GM18951 (cell line): ENCODE measurements at regions of chr18 and their contacts with region 1.

Region 1: GRCh38 chr18:62982600-62983251 is 267.4 kb downstream of the PHLPP1 start:
- POLR2A ChIP-seq: no peak

Region 2: DNA sequence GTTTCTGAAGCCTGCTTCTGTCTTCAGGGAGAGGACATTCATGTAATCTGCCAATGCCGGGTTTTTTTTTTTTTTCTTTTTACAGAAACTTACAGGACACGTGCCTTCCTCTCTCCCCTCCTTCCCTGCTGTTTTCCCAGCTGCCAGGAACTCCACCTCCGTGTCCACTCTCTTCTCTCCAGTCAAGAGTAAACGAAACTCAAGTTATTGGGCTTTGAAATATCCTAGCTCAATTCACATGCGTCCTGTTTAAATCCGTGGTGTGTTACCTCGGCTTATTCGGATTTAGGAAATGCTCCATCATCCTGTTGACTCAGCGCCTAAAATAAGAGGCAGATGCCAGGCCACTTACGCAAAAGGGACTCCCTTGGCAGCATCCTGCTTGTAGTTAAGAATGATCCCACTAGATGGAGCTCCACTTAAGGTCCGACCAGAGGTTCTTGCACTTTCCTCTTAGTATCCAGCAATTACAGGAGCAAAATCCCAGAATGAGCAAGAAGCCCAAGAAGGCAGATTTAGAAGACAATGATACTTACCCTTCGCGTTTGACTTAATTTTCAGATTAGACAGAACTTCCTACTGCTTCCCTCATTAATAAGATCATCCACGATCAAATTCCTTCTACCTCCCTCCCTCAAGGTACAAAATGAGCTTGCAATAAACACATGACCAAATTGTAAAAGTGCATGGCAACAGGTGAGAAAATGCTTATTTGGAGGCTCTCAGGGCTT is 557.1 kb before region 1 on chr18:
- in situ Hi-C with region 1: loop called (anchors 25 kb)
- POLR2A ChIP-seq: no peak

Region 3: GRCh38 chr18:62610701-62611411 is 371.9 kb before region 1 on chr18:
- in situ Hi-C with region 1: loop called (anchors 25 kb)
- POLR2A ChIP-seq: no peak

Region 4: GRCh38 chr18:62867534-62867933 is 115.2 kb before region 1 on chr18:
- in situ Hi-C with region 1: no loop called
- POLR2A ChIP-seq: no peak